Dorsolateral prefrontal cortex (tissue), 120 donors: ENCODE measurements at regions of chr1 and their contacts with region 1.

Region 1: GRCh38 chr1:205750138-205751035 is at the start of gene NUCKS1:
- DNase-seq: peak; percentile 93 to 100 (median 98)
- H3K4me3 ChIP-seq: peak within 1 kb of the TSS; percentile 54 to 98 (median 85)
- H3K27ac ChIP-seq: peak within 1 kb of the TSS; percentile 72 to 99 (median 97)
- H3K27me3 ChIP-seq: no peaks in the 10 kb centered on the region
- CTCF ChIP-seq: peak in 55 of 56 donors; percentile 32 to 79 (median 61)
- total RNA-seq, gene NUCKS1: 124 to 316 (median 225) TPM

Region 2: GRCh38 chr1:204959374-204959773 is 791.0 kb before region 1 on chr1:
- intact Hi-C with region 1: no loop called
- DNase-seq: peak in 1 of 10 donors; percentile 48
- H3K4me3 ChIP-seq: no peak overlapping the region
- H3K27ac ChIP-seq: peak overlapping the region in 41 of 59 donors; percentile 2 to 68 (median 41)
- H3K27me3 ChIP-seq: no peaks in the 10 kb centered on the region
- CTCF ChIP-seq: peak in 3 of 56 donors; percentile 20 to 27 (median 21)

Region 3: DNA sequence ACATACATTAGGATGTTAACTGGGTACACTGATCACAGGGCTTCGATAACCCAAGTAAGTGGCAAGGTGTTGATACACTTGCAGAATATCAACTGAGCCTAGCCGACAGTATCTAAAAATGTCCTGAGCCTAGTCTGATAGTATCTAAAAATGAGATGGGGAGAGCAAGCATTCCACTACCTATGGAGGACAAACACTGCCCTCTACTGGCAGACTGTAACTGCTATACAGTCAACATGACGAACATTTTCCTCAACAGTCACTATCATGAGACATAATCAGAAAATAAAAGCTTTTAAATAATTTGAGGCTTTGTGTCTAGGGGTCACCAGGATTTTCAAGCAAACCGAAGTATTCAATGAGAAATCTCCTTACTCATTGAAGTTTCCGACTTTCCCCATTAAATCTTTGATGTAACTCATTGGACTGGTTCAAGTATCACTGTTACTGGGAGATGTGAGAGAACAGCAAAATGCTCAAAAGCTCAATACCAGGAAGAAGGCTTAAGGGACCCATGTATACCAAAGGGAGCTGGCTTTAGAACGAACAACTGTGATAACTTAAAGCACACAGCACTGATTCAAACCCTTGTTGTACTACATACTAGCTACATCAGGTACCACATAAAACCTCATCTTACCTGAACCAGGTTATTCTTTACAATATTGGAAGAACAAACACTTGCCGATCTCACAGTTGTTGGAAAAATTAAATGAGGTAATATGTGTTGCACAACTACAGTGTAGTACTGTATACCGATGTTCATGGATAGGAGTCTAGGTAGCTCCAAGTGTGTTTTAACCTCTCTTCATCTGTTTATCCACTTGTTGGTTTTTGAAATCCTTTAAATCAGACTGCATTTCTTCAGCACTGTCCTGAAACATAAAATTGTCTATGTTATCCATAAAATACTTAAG is 39.0 kb before region 1 on chr1:
- intact Hi-C with region 1: loop called in 1 of 2 experiments (anchors 5 kb)
- DNase-seq: peak in 4 of 10 donors; percentile 59 to 88 (median 73)
- H3K4me3 ChIP-seq: no peak overlapping the region
- H3K27ac ChIP-seq: peak overlapping the region in 53 of 59 donors; percentile 5 to 78 (median 52)
- H3K27me3 ChIP-seq: no peaks in the 10 kb centered on the region
- CTCF ChIP-seq: peak; percentile 85 to 99 (median 93)

Region 4: GRCh38 chr1:205772607-205773032 is 22.2 kb after region 1 on chr1:
- intact Hi-C with region 1: loop called in 1 of 2 experiments (anchors 2 kb)
- DNase-seq: no peak
- H3K4me3 ChIP-seq: no peak overlapping the region
- H3K27ac ChIP-seq: no peak overlapping the region
- H3K27me3 ChIP-seq: no peaks in the 10 kb centered on the region
- CTCF ChIP-seq: no peak

Region 5: GRCh38 chr1:205812878-205813754 is 62.7 kb after region 1 on chr1 and contains the start of gene SLC41A1:
- intact Hi-C with region 1: loop called in 1 of 2 experiments (anchors 2 kb)
- DNase-seq: peak; percentile 91 to 98 (median 96)
- H3K4me3 ChIP-seq: peak within 1 kb of the TSS; percentile 47 to 99 (median 90)
- H3K27ac ChIP-seq: peak within 1 kb of the TSS; percentile 68 to 97 (median 93)
- H3K27me3 ChIP-seq: no peaks in the 10 kb centered on the region
- CTCF ChIP-seq: peak in 16 of 56 donors; percentile 3 to 49 (median 14)
- total RNA-seq, gene SLC41A1: 27.3 to 87.8 (median 42.5) TPM